GM12878 (cell line): ENCODE measurements at regions of chrX and their contacts with region 1.

Region 1: DNA sequence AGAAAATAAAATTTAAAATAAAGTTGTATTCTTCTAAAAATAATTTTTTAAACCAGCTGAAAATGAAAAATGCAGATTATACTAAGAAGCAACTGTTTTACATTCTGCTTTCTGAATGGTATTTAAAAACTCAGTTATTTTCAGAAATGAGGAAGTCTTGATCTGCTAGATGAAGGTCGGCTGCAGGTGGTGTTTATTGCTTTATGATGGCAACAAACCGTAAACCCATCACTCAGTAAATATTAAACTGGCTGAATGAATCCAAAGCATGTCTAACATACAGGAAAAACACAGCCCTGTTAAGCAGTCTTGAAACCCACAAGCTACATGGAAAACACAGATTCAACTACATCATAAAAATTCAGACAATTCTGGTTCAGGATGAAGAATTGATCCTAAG is 29.3 kb downstream of the DYNLT3 start:
- DNase-seq: no peak
- ATAC-seq: peak; percentile 45
- H3K4me3 ChIP-seq: no peak overlapping the region
- H3K27ac ChIP-seq: peak overlapping the region; percentile 37; the same call in 1 of the 2 replicates
- H3K4me1 ChIP-seq: peaks cover 20% of the 10 kb centered on the region
- H3K27me3 ChIP-seq: no peaks in the 10 kb centered on the region; a peak in 1 of 4 replicates
- CTCF ChIP-seq: no peak
- EP300 ChIP-seq: no peak
- POLR2A ChIP-seq: no peak
- RAD21 ChIP-seq: no peak

Region 2: DNA sequence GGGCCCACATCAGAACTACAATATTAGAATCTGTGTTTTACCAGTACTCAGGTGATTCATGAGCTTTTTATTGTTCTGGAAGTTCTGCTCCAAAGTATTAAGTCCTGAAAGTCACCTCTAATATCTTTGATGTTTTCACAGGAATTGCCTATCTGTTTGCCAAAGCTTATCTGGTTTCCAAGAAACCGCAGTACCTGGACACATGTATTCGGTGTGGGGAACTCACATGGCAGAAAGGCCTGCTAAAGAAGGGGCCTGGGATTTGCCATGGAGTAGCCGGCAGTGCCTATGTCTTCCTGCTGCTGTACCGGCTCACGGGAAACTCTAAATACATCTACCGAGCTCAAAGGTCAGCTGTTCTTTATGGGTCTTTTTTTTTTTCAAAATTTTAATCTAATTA is 150.9 kb before region 1 on chrX:
- CTCF ChIA-PET with region 1: no interaction called
- POLR2A ChIA-PET with region 1: no interaction called
- RAD21 ChIA-PET with region 1: no interaction called
- SMC1A ChIA-PET with region 1: no interaction called
- in situ Hi-C with region 1: no loop called
- intact Hi-C with region 1: no loop called
- DNase-seq: no peak
- ATAC-seq: no peak
- H3K4me3 ChIP-seq: no peak overlapping the region
- H3K27ac ChIP-seq: no peak overlapping the region
- H3K4me1 ChIP-seq: no peaks in the 10 kb centered on the region
- H3K27me3 ChIP-seq: no peaks in the 10 kb centered on the region
- CTCF ChIP-seq: no peak
- EP300 ChIP-seq: no peak
- POLR2A ChIP-seq: no peak
- RAD21 ChIP-seq: no peak

Region 3: DNA sequence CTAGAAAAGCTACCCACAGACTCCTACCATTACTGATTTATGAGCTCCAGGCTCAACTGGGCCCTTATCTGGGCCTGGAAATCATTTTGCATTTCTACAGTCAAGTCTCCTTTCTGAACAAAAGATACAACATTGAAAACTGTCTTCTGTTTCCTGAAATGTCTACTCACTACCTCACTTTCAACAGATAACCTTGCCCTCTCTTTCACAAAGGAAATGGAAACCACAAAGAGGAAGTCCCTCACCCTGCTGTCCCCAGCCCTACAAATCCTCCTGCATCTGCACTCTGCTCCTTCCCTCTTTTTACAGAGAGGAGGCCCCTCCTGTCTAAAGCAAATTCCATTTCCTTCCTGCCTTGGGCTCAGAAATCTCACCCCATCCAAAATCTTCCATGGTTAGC is 63.0 kb before region 1 on chrX:
- CTCF ChIA-PET with region 1: interaction called, 4 read pairs
- POLR2A ChIA-PET with region 1: interaction called, 5 read pairs
- RAD21 ChIA-PET with region 1: interaction called, 4 read pairs
- SMC1A ChIA-PET with region 1: interaction called, 8 read pairs
- in situ Hi-C with region 1: no loop called
- intact Hi-C with region 1: loop called (anchors 2 kb)
- DNase-seq: peak; percentile 67
- ATAC-seq: peak; percentile 92
- H3K4me3 ChIP-seq: peak overlapping the region; percentile 10; the same call in 1 of the 2 replicates
- H3K27ac ChIP-seq: peak overlapping the region; percentile 87
- H3K4me1 ChIP-seq: peaks cover 32% of the 10 kb centered on the region
- H3K27me3 ChIP-seq: no peaks in the 10 kb centered on the region
- CTCF ChIP-seq: no peak
- EP300 ChIP-seq: peak in 1 of 2 experiments; percentile 57; a peak in 1 of 4 replicates
- POLR2A ChIP-seq: no peak
- RAD21 ChIP-seq: no peak